ENCODE measurements at regions of chr18 and their contacts with region 1.

Region 1: GRCh38 chr18:14971461-14972185 is 223.7 kb downstream of the ANKRD30B start:
- DNase-seq: no peak
- H3K4me3 ChIP-seq: no peak overlapping the region
- H3K27me3 ChIP-seq: no peaks in the 10 kb centered on the region
- CTCF ChIP-seq: no peak

Region 2: GRCh38 chr18:14747513-14748474 is 223.8 kb before region 1 on chr18 and contains the start of gene ANKRD30B:
- CTCF ChIA-PET with region 1: no interaction called
- POLR2A ChIA-PET with region 1: interaction called, 12 read pairs
- DNase-seq: no peak
- H3K4me3 ChIP-seq: no peak within 1 kb of the TSS
- H3K27me3 ChIP-seq: no peaks in the 10 kb centered on the region
- CTCF ChIP-seq: no peak
- polyA plus RNA-seq, gene ANKRD30B: 0.05 TPM in 1 of 2 replicates, not detected in the other

Region 3: GRCh38 chr18:14949800-14950664 is 21.6 kb before region 1 on chr18:
- CTCF ChIA-PET with region 1: no interaction called
- POLR2A ChIA-PET with region 1: no interaction called
- DNase-seq: no peak
- H3K4me3 ChIP-seq: no peak overlapping the region
- H3K27me3 ChIP-seq: no peaks in the 10 kb centered on the region
- CTCF ChIP-seq: no peak

Measured in BJ (cell line).